Pancreas (tissue), 10 donors: ENCODE measurements at regions of chr14 and their contacts with region 1.

Region 1: GRCh38 chr14:80356413-80356812 is 145.1 kb upstream of the DIO2 start:
- DNase-seq: no peak
- ATAC-seq: no peak
- H3K4me3 ChIP-seq: no peak overlapping the region
- H3K27ac ChIP-seq: no peak overlapping the region
- H3K4me1 ChIP-seq: no peaks in the 10 kb centered on the region
- H3K27me3 ChIP-seq: no peaks in the 10 kb centered on the region
- CTCF ChIP-seq: peak in 1 of 4 donors; percentile 10

Region 2: GRCh38 chr14:80055667-80056496 is 300.5 kb before region 1 on chr14:
- intact Hi-C with region 1: loop called in 1 of 3 experiments (anchors 10 kb)
- DNase-seq: peak in 4 of 6 donors; percentile 13 to 52 (median 14)
- ATAC-seq: peak; percentile 53 to 91 (median 86)
- H3K4me3 ChIP-seq: no peak overlapping the region
- H3K27ac ChIP-seq: no peak overlapping the region
- H3K4me1 ChIP-seq: no peaks in the 10 kb centered on the region
- H3K27me3 ChIP-seq: no peaks in the 10 kb centered on the region
- CTCF ChIP-seq: peak; percentile 44 to 64 (median 55)

Region 3: DNA sequence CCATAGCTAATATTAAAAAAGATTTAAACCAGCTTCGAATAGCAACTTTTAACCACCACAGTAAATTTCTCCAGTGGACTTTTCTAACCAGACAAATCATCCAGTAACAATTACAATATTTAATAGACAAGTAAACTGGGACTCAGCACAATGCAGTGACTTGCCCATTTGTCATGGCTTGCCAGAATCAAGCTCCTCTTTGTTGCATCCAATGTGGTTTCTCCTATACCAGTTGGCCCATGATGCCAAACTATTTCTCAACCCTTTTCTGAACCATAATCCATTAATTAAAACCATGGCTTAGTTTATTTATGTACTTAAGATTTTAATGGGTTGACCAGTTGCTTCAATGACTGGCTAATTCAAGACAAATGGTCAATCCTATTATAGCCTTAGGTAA is 209.5 kb before region 1 on chr14:
- intact Hi-C with region 1: no loop called
- DNase-seq: no peak
- ATAC-seq: no peak
- H3K4me3 ChIP-seq: no peak overlapping the region
- H3K27ac ChIP-seq: no peak overlapping the region
- H3K4me1 ChIP-seq: no peaks in the 10 kb centered on the region
- H3K27me3 ChIP-seq: no peaks in the 10 kb centered on the region
- CTCF ChIP-seq: no peak

Region 4: GRCh38 chr14:80403036-80403435 is 46.6 kb after region 1 on chr14:
- intact Hi-C with region 1: no loop called
- DNase-seq: no peak
- ATAC-seq: no peak
- H3K4me3 ChIP-seq: no peak overlapping the region
- H3K27ac ChIP-seq: no peak overlapping the region
- H3K4me1 ChIP-seq: no peaks in the 10 kb centered on the region
- H3K27me3 ChIP-seq: no peaks in the 10 kb centered on the region
- CTCF ChIP-seq: no peak